T-cell (primary cell): ENCODE measurements at regions of chr13 and their contacts with region 1.

Region 1: DNA sequence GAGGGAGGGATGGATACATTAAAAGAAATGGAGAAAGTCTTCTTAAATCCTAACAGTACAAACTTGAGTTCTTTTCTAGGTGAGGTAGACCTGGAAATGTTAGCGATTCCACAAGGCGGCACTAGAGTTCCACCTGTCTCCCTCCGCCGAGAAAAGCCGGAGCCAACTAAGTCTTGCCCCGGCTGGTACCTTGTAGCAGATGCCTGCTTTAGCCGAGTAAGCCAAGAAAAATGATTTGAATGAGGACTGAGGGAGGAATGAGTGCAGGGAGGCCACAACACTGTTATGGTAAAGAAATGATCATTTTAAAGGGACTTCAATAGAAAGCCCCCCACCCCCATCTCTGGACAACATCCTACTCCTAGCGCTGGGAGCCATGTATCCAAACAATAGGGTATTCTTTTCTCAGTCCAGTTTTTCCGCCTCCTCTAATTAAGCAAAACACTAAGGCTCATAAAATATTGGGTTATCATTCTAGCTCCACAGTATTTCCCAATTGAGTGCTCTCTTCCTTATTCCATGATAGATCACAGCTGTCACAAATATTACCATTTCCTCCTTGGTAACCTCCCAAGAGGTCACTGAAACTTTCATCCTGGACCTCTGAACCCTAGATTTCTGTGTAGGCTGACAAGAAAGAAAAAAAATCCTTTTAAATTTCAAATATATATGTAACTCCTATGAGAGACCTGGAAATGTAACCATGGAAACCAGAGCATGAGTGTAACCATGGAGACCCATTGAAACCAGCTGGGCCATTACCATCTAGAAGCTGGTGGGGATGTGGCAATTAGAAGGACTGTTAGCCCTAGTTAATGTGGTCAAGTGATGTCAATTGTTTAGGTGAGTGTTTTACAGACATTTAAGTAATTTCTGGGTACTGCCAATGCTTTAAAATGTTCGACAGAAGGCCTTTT is 58.3 kb downstream of the GPALPP1 start:
- DNase-seq: peak; percentile 40 to 87 (median 72)
- ATAC-seq: peak; percentile 84 to 94 (median 92)
- H3K4me3 ChIP-seq: peak overlapping the region; percentile 27 to 42
- H3K4me3 Mint-ChIP-seq: peak overlapping the region; percentile 65 to 75 (median 70)
- H3K27ac ChIP-seq: no peak overlapping the region
- H3K27ac Mint-ChIP-seq: peak overlapping the region in 1 of 2 donors; percentile 1
- H3K4me1 ChIP-seq: peaks cover 0 to 10% of the 10 kb centered on the region in 2 experiments
- H3K4me1 Mint-ChIP-seq: peaks cover 7 to 10% (median 8%) of the 10 kb centered on the region in 3 donors
- H3K27me3 ChIP-seq: peaks cover 0 to 8% of the 10 kb centered on the region in 2 experiments
- H3K27me3 Mint-ChIP-seq: peaks cover 3 to 9% of the 10 kb centered on the region in 2 donors

Region 2: DNA sequence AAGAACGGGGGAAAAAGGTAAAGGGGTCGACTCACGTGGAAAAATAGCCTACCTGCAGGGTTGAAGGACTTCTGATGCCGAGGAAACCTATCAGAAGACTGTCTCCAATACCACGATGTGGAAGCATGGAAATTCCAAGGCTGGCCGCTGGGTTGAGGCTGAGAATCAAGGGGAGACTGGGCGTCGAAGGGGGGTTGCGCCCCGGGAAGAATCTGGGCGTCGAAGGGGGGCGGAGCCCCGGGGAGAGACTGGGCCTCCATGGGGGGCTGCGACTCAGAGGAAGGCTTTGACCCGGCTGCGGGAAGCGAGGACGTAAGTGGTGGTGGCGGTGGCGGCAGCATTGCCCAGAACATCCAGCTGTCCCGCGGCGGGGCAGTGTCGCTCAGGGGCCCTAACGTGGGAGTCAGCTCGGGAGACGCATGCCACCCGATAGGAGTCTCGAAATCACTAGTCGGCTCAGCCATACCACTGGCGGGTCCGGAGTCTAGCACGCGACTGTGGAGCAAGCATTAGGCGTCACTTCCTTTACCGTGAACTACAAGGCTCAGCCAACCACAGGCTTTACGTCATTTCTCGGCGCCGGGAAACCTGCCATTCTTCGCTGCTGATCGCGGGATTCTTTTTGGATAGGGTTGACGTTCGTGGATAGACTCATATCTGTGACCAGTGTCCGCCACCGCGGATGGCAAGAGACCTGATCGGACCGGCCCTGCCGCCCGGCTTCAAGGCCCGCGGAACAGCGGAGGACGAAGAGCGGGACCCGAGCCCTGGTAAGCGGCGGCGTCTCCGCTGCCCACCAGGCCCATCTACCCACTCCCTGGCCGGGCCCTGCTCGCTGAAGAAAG is 58.5 kb before region 1 on chr13 and contains the starts of genes GPALPP1 and NUFIP1:
- CTCF ChIA-PET with region 1: no interaction called
- POLR2A ChIA-PET with region 1: no interaction called
- DNase-seq: peak; percentile 70 to 96 (median 91)
- ATAC-seq: peak; percentile 96 to 98 (median 98)
- H3K4me3 ChIP-seq: peak within 1 kb of the TSS; percentile 94 to 99
- H3K4me3 Mint-ChIP-seq: peak within 1 kb of the TSS; percentile 96 to 99 (median 98)
- H3K27ac ChIP-seq: peak within 1 kb of the TSS; percentile 90
- H3K27ac Mint-ChIP-seq: peak within 1 kb of the TSS; percentile 88 to 95
- H3K4me1 ChIP-seq: peaks cover 16 to 25% of the 10 kb centered on the region in 2 experiments
- H3K4me1 Mint-ChIP-seq: peaks cover 61 to 70% (median 67%) of the 10 kb centered on the region in 3 donors
- H3K27me3 ChIP-seq: no peaks in the 10 kb centered on the region
- H3K27me3 Mint-ChIP-seq: no peaks in the 10 kb centered on the region
- total RNA-seq, gene GPALPP1: 28.0 to 37.8 (median 31.7) TPM
- total RNA-seq, gene NUFIP1: 3.1 to 4.9 (median 4.0) TPM

Region 3: DNA sequence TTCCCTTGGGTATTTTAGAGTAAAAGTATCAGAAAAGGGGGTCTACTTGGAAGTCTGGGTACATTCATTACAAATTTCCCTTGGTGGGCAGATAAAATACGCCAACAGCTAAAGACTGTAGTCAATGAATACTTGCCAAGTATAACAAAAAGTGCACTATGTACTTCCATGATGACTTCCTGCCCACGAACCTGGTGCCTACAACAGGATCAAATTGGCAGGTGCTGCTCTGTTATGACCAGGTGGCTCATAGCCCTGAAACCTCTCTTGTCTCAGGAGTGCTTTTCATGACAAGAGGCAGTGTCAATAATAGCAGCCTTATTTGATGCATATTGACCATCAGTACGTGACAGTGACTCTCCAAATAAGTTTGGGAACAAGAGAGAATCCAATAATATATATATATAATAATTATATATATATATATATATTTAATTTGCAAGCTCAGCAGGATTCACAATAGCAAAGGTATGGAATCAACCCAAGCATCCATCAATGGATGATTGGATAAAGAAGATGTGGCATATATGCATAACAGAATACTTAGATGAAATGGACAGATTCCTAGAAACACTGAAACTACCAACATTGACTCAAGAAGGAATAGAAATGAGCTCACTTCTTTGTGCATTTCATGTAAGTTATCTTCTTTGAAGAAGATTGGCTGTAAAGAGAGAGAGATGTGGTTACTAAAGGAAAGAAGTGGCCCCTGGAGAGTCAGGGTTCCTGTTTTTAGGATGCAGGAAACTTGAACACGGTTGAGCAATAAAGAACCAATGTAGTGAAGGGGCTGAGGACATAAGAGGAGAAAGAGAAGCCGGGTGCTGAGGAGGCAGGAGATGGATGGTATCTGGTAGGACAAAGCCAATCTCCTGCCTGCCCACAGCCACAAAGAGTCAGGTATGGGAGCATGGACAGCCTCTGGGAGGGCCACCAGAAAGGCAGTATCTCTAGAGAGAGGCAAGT is 20.7 kb after region 1 on chr13:
- CTCF ChIA-PET with region 1: no interaction called
- POLR2A ChIA-PET with region 1: no interaction called
- DNase-seq: no peak
- ATAC-seq: no peak
- H3K4me3 ChIP-seq: no peak overlapping the region
- H3K4me3 Mint-ChIP-seq: no peak overlapping the region
- H3K27ac ChIP-seq: no peak overlapping the region
- H3K27ac Mint-ChIP-seq: no peak overlapping the region
- H3K4me1 ChIP-seq: no peaks in the 10 kb centered on the region
- H3K4me1 Mint-ChIP-seq: no peaks in the 10 kb centered on the region
- H3K27me3 ChIP-seq: peaks cover 0 to 9% of the 10 kb centered on the region in 2 experiments
- H3K27me3 Mint-ChIP-seq: peaks cover 10 to 19% of the 10 kb centered on the region in 2 donors

Region 4: DNA sequence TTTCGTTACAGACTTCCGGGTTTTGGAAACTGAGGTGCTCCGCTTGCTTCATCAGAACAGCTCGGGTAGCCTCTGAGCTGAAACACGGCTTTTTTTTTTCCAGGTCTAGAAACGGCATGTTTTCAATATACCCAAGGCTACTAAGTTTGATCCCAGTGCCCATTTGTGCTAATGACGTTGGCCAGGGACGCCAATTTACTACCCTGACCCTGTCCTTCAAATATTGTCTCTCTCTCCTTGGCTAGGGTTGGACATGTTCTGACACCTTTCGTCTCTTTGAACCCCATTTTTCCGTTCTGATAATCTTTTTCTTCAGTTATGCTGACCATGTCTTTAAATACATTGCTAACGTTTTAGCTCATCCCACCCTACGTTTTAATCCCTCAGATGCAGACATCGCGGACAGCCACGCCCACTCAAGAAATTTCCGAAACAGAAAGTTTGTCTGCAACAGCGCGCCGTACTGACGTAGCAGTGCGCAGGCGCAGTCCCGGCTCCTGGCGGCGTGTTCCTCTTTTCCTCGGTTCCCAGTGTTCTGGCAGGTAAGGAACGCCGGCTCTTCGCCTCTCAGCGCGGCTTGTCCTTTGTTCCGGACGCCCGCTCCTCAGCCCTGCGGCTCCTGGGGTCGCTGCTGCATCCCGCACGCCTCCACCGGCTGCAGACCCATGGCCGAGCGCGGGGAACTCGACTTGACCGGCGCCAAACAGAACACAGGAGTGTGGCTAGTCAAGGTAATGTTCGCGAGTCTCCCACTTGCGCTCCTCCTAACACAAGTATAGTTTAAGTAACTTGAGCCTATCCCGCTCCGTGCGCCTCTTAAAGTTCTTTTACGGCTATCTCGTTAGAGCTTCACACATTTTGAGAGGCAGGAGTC is 72.6 kb after region 1 on chr13 and contains the start of gene GTF2F2:
- CTCF ChIA-PET with region 1: interaction called in 1 of 2 experiments, 10 read pairs
- POLR2A ChIA-PET with region 1: no interaction called
- DNase-seq: peak; percentile 65 to 93 (median 81)
- ATAC-seq: peak; percentile 64 to 79 (median 74)
- H3K4me3 ChIP-seq: peak within 1 kb of the TSS; percentile 88 to 95
- H3K4me3 Mint-ChIP-seq: no peak within 1 kb of the TSS
- H3K27ac ChIP-seq: peak within 1 kb of the TSS; percentile 90
- H3K27ac Mint-ChIP-seq: no peak within 1 kb of the TSS
- H3K4me1 ChIP-seq: peaks cover 18 to 34% of the 10 kb centered on the region in 2 experiments
- H3K4me1 Mint-ChIP-seq: peaks cover 11 to 20% (median 15%) of the 10 kb centered on the region in 3 donors
- H3K27me3 ChIP-seq: no peaks in the 10 kb centered on the region
- H3K27me3 Mint-ChIP-seq: no peaks in the 10 kb centered on the region
- total RNA-seq, gene GTF2F2: 12.9 to 17.0 (median 15.6) TPM

Region 5: DNA sequence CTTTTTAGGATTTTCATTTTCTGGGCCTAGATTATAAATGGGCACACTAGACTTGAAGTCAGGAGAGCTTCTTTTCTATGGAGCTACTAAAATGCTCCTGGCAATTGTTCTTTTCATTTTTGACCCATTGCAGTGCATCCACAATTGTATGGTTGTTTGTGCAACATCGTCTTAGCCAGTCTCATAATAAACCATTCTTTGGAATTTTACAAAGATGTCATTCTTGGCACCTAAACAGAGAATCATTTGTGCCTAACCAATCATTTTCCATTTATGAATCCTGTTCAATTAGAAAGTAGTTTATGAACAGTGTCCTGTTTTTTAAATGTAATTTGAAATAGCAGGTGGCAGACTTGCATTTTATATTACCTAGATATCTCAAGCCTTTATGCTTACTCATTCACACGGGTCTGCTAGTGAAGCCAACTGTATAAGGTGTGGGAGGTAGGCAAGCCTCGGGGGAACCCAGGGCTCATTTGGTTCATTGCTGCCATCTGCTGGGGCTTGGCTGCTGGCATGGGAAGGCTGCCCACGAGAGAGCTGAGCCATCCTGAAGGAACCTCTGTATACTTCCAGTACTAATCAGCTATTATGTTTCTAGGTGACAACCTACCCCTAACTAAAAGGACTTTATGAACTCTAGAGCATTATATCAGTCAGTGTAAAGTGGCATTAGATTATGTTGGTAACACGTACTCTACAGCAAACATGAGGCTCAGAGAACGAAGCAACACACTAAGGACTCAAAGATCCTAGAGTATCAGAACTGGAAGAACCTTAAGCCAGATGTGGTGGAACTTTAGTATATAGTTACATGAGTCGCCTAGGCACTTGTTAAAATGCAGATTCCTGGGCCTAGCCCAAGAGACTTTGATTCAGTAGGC is 233.3 kb after region 1 on chr13:
- CTCF ChIA-PET with region 1: interaction called in 1 of 2 experiments, 14 read pairs
- POLR2A ChIA-PET with region 1: no interaction called
- DNase-seq: peak in 20 of 35 experiments; percentile 2 to 51 (median 19)
- ATAC-seq: peak in 3 of 4 experiments; percentile 50 to 69 (median 62)
- H3K4me3 ChIP-seq: no peak overlapping the region
- H3K4me3 Mint-ChIP-seq: no peak overlapping the region
- H3K27ac ChIP-seq: no peak overlapping the region
- H3K27ac Mint-ChIP-seq: no peak overlapping the region
- H3K4me1 ChIP-seq: no peaks in the 10 kb centered on the region
- H3K4me1 Mint-ChIP-seq: peaks cover 0 to 5% (median 0%) of the 10 kb centered on the region in 3 donors
- H3K27me3 ChIP-seq: no peaks in the 10 kb centered on the region
- H3K27me3 Mint-ChIP-seq: no peaks in the 10 kb centered on the region

Region 6: GRCh38 chr13:45310341-45311125 is 262.9 kb after region 1 on chr13:
- CTCF ChIA-PET with region 1: interaction called, 12 to 27 read pairs
- POLR2A ChIA-PET with region 1: interaction called in 1 of 2 experiments, 5 read pairs
- DNase-seq: no peak
- ATAC-seq: no peak
- H3K4me3 ChIP-seq: peak overlapping the region; percentile 46 to 86
- H3K4me3 Mint-ChIP-seq: peak overlapping the region; percentile 77 to 86 (median 86)
- H3K27ac ChIP-seq: no peak overlapping the region
- H3K27ac Mint-ChIP-seq: peak overlapping the region in 1 of 2 donors; percentile 19
- H3K4me1 ChIP-seq: peaks cover 5 to 21% of the 10 kb centered on the region in 2 experiments
- H3K4me1 Mint-ChIP-seq: peaks cover 19% of the 10 kb centered on the region in 3 donors
- H3K27me3 ChIP-seq: peaks cover 0 to 15% of the 10 kb centered on the region in 2 experiments
- H3K27me3 Mint-ChIP-seq: peaks cover 5 to 6% of the 10 kb centered on the region in 2 donors

Region 7: DNA sequence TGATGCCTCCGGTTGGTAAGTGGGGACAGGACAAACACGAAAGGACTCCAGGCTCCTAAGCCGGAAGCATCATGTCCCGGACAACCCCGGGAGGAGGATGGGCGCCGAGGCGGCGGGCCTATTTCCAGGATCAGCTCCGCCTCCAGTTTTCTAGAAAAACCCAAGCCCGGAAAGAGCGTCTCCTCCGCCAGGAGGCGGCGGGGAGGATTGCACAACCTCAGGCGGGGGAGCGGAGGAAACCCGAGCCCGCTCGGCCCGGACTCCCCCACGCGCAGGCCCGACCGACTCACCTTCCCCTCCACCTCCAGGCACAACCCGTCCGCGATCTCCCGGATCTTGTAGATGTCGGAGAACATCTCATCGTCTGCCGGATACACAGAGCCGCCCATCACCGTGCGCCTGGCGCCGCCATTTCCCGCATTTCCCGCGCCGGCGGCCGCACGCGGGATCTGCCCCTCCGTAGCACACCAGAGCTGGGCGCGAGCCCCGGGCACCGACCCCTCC is 292.8 kb after region 1 on chr13:
- CTCF ChIA-PET with region 1: interaction called in 1 of 2 experiments, 4 read pairs
- POLR2A ChIA-PET with region 1: interaction called in 1 of 2 experiments, 10 read pairs
- DNase-seq: peak; percentile 50 to 86 (median 78)
- ATAC-seq: peak; percentile 47 to 54 (median 52)
- H3K4me3 ChIP-seq: peak overlapping the region; percentile 69 to 85
- H3K4me3 Mint-ChIP-seq: peak overlapping the region; percentile 96 to 98 (median 98)
- H3K27ac ChIP-seq: peak overlapping the region; percentile 88
- H3K27ac Mint-ChIP-seq: peak overlapping the region; percentile 96 to 99
- H3K4me1 ChIP-seq: peaks cover 19 to 38% of the 10 kb centered on the region in 2 experiments
- H3K4me1 Mint-ChIP-seq: peaks cover 66 to 69% (median 67%) of the 10 kb centered on the region in 3 donors
- H3K27me3 ChIP-seq: no peaks in the 10 kb centered on the region
- H3K27me3 Mint-ChIP-seq: no peaks in the 10 kb centered on the region